Activated CD8-positive, alpha-beta T cell treated with anti-CD3 and anti-CD28 coated beads, Interleukin-2, amount 10 ng/mL, durations not matched to agents 7 days and 5 days (primary cell): ENCODE measurements at regions of chr17 and their contacts with region 1.

Region 1: GRCh38 chr17:1516388-1517161 is at the start of gene INPP5K:
- DNase-seq: peak; percentile 99
- ATAC-seq: peak; percentile 93
- H3K4me3 Mint-ChIP-seq: peak within 1 kb of the TSS; percentile 86
- H3K27ac Mint-ChIP-seq: peak within 1 kb of the TSS; percentile 86
- H3K4me1 Mint-ChIP-seq: peaks cover 22% of the 10 kb centered on the region
- H3K27me3 Mint-ChIP-seq: no peaks in the 10 kb centered on the region
- total RNA-seq, gene INPP5K: 37.6 to 39.6 TPM

Region 2: GRCh38 chr17:1374431-1375177 is 142.0 kb before region 1 on chr17:
- CTCF ChIA-PET with region 1: interaction called, 12 read pairs
- POLR2A ChIA-PET with region 1: no interaction called
- DNase-seq: no peak
- ATAC-seq: peak; percentile 40
- H3K4me3 Mint-ChIP-seq: no peak overlapping the region
- H3K27ac Mint-ChIP-seq: peak overlapping the region; percentile 63
- H3K4me1 Mint-ChIP-seq: peaks cover 63% of the 10 kb centered on the region
- H3K27me3 Mint-ChIP-seq: no peaks in the 10 kb centered on the region

Region 3: GRCh38 chr17:1462287-1463112 is 54.1 kb before region 1 on chr17:
- CTCF ChIA-PET with region 1: interaction called, 13 read pairs
- POLR2A ChIA-PET with region 1: interaction called, 5 read pairs
- DNase-seq: no peak
- ATAC-seq: no peak
- H3K4me3 Mint-ChIP-seq: no peak overlapping the region
- H3K27ac Mint-ChIP-seq: no peak overlapping the region
- H3K4me1 Mint-ChIP-seq: peaks cover 19% of the 10 kb centered on the region
- H3K27me3 Mint-ChIP-seq: peaks cover 33% of the 10 kb centered on the region

Region 4: DNA sequence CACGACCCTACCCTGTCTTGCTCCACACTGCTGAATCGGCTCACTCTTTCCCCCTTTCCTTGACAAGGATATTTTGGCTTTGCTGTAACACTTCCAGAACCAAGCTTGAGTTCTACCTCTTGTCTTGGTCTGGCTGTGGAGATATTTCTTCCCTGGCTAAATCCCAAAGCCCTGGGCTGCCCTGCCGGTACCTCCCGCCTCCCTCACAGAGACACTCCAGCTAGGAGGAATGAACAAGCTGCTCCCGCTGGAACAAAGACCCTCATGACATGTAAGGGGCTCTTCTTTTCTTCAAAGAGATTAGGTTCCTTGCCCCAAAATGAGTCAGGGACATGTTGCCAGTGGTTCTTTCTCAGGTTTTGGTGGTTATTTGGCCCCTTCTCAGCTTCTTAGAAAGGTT is 11.0 kb before region 1 on chr17:
- CTCF ChIA-PET with region 1: interaction called, 18 read pairs
- POLR2A ChIA-PET with region 1: interaction called, 4 read pairs
- DNase-seq: no peak
- ATAC-seq: no peak
- H3K4me3 Mint-ChIP-seq: no peak overlapping the region
- H3K27ac Mint-ChIP-seq: no peak overlapping the region
- H3K4me1 Mint-ChIP-seq: peaks cover 17% of the 10 kb centered on the region
- H3K27me3 Mint-ChIP-seq: no peaks in the 10 kb centered on the region

Region 5: DNA sequence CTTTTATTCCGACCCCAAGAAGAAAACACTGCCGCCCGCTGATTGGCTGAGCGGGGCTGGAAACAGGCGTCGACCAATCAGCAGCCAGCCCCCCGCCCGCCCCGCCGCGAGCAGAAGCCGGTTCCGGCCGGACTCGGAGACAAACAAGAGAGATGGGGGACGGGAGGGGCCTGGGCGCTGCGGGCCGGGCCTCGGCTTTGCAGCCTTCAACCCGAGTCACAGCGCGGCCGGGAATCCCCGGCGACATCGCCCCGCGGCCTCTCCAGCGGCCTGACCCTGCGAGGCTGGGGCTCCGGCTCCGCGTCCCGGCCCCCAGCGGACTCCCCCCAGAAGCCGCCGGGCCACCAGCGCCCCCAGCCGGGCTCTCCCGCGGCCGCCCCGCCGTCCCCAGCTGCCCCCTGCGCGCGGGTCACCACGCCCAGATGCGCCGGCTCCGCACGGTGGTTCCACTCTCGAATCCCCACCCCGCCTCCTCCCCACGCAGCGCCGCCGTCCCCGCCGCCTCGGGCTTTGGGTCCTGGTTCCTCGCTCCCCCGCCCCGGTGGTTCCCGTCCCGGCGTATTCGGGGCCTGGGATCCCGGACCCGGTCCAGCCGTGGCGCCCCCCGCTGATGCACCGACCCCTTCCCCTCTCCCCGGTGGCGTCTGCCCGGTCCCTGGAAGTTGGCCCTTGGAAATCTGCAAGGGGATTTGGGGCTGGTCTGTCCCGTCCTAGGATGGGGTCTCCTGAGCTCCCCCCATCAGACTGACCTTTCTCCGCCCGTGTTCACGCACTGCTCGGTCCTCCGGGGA is 112.5 kb after region 1 on chr17:
- CTCF ChIA-PET with region 1: interaction called, 21 read pairs
- POLR2A ChIA-PET with region 1: no interaction called
- DNase-seq: peak; percentile 94
- ATAC-seq: peak; percentile 85
- H3K4me3 Mint-ChIP-seq: peak overlapping the region; percentile 85
- H3K27ac Mint-ChIP-seq: peak overlapping the region; percentile 78
- H3K4me1 Mint-ChIP-seq: peaks cover 28% of the 10 kb centered on the region
- H3K27me3 Mint-ChIP-seq: peaks cover 22% of the 10 kb centered on the region